ENCODE measurements at regions of chr18 and their contacts with region 1.

Region 1: DNA sequence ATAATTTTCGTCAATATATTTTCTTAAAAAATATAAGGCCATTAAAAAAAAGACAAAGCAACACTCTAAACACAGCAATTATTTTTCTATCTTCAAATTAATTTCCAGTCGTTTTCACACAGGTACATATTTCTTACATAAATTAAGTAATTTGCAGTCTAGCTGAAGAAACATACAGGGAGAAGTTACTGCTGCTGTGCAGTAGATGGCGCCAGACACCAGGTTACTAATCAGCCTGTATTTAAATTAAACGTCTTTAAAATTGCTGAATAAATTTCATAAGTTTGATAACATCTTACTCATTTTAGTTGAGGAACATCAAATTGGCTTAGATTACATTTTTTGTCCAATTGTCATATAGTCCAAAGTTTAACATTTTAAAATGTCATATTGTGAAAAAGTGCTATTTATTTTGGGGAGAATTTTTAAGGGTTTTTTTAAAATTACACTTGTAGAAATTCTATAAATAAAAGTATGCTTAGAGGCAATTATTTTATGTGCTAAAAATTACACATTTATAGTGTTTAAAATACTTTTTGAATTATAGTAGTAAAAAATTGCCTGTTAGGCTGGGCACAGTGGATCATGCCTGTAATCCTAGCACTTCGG is 88.4 kb downstream of the PMAIP1 start:
- H3K4me3 ChIP-seq: no peak overlapping the region
- H3K27ac ChIP-seq: no peak overlapping the region
- H3K4me1 ChIP-seq: peaks cover 10% of the 10 kb centered on the region
- CTCF ChIP-seq: peak; percentile 67

Region 2: DNA sequence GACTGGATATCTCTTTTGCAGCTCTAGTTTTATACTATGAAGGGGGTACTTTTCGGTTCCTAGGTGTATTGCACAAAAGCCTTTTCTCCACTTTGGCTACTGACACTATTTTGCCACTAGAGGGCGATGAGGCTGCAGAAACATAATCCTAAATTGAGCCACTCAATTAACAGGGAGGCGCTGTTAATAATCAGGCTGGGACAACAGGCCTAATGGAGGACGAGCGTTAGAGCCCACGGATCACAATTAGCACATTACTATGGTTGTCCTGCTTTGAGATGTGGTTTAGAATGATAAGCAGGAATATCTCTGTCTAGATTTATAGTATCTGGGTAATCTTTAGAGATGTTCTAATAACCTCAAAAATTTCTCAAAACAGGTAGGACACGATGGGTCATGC is 150.6 kb before region 1 on chr18:
- CTCF ChIA-PET with region 1: interaction called, 18 read pairs
- POLR2A ChIA-PET with region 1: no interaction called
- H3K4me3 ChIP-seq: no peak overlapping the region
- H3K27ac ChIP-seq: no peak overlapping the region
- H3K4me1 ChIP-seq: peaks cover 7% of the 10 kb centered on the region
- CTCF ChIP-seq: peak; percentile 92

Region 3: DNA sequence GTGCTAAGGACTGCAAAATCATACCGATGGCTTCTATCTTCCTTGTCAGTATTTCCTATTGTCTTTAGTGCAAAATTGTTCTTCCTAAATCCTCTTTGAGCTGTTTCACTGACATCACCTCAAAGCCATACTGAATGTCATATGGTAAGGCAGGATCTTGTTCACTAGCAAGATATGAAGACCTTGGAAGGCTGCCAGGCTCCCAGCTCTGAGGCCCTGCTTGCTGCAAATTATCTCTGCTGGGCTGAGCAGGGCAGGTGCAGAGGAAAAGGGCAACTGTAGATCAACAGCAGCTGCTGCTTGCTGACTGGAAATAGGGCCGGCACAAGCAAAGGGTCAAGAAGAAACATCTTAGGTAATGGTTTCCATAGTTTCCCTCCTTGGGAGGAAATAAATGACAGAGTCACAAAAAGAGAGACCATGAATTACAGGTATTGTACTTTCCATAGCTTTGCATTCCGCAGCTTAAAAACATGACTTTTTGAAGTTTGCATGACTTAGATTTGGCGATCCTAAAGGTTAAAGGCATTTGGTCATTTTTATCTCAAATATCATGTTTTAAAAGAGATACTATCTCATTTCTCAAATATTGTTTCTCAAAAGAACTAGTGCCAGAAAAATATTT is 30.1 kb before region 1 on chr18:
- CTCF ChIA-PET with region 1: interaction called, 13 read pairs
- POLR2A ChIA-PET with region 1: no interaction called
- H3K4me3 ChIP-seq: no peak overlapping the region
- H3K27ac ChIP-seq: no peak overlapping the region
- H3K4me1 ChIP-seq: peaks cover 13% of the 10 kb centered on the region
- CTCF ChIP-seq: no peak

Region 4: GRCh38 chr18:60413944-60414547 is 425.8 kb after region 1 on chr18:
- CTCF ChIA-PET with region 1: interaction called, 12 read pairs
- POLR2A ChIA-PET with region 1: no interaction called
- H3K4me3 ChIP-seq: no peak overlapping the region
- H3K27ac ChIP-seq: no peak overlapping the region
- H3K4me1 ChIP-seq: no peaks in the 10 kb centered on the region
- CTCF ChIP-seq: peak; percentile 42

Region 5: GRCh38 chr18:60549338-60549960 is 561.2 kb after region 1 on chr18:
- CTCF ChIA-PET with region 1: interaction called, 40 read pairs
- POLR2A ChIA-PET with region 1: no interaction called
- H3K4me3 ChIP-seq: no peak overlapping the region
- H3K27ac ChIP-seq: no peak overlapping the region
- H3K4me1 ChIP-seq: no peaks in the 10 kb centered on the region
- CTCF ChIP-seq: no peak